Calu3 (cell line): ENCODE measurements at regions of chr16 and their contacts with region 1.

Region 1: DNA sequence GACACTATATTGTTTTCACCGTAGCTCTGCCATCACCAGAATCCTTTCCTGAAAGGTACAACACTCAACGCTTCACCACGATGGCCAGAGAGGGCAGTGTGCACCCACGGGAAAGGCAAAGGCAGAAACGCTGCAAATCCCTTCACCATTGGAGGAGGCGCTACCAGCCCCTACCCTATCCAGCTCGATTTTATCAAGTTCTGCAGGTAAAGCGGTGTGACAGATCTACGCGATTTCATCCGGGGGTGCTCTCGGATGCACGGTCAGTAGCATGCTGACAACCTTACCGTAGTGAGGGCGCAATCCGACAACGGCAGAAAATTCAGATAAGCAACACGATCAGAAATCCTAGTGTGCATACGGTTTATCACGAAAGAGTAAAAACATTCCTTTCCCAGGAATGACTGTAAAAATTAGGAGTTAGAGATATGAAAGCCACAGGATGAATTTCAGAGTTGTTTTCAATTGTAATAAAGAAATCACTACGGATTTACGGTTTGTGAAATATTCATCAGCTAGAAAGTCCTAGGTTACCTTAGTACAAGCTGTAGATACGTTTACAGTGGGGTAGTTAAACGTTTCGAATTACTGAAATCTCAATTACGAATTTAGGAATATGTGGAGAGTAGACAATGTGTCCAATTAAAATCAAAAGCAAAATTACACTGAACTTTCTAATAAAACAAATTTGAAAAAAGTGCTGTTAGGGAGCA is 1.8 kb downstream of the NETO2 start:
- DNase-seq: peak; percentile 93
- H3K4me3 Mint-ChIP-seq: peak overlapping the region; percentile 94
- H3K27ac Mint-ChIP-seq: peak overlapping the region; percentile 81
- H3K4me1 Mint-ChIP-seq: peaks cover 44% of the 10 kb centered on the region
- H3K27me3 Mint-ChIP-seq: no peaks in the 10 kb centered on the region
- CTCF ChIP-seq: peak; percentile 82

Region 2: DNA sequence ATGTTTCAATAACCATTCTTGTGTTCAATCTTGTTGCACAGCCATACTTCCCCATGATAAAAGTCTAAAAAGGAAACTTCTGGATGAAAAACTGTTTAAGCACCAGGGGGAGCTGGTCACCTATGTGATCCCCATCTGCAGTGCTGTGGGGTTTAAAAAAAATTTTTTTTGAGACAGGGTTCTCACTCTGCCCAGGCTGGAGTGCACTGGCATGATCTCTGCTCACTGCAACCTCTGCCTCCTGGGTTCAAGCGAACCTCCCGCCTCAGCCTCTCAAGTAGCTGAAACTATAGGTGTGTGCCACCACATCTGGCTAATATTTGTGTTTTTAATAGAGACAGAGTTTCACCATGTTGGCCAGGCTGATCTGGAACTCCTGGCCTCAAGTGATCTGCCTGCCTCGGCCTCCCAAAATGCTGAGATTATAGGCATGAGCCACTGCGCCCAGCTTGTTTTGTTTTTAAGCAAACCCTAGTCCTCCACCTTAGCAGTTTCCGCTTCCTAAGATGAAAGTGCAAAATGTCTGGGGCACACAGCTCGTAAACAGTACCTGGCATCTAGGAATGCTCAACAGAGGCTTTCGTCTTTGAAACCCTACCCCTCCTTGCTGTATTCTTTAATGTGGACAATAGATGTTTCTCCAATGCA is 193.9 kb before region 1 on chr16:
- CTCF ChIA-PET with region 1: interaction called, 5 read pairs
- intact Hi-C with region 1: loop called (anchors 5 kb)
- DNase-seq: peak; percentile 66
- H3K4me3 Mint-ChIP-seq: no peak overlapping the region
- H3K27ac Mint-ChIP-seq: no peak overlapping the region
- H3K4me1 Mint-ChIP-seq: peaks cover 9% of the 10 kb centered on the region
- H3K27me3 Mint-ChIP-seq: no peaks in the 10 kb centered on the region
- CTCF ChIP-seq: peak; percentile 57

Region 3: GRCh38 chr16:47058295-47059086 is 83.4 kb before region 1 on chr16:
- CTCF ChIA-PET with region 1: no interaction called
- intact Hi-C with region 1: no loop called
- DNase-seq: no peak
- H3K4me3 Mint-ChIP-seq: no peak overlapping the region
- H3K27ac Mint-ChIP-seq: no peak overlapping the region
- H3K4me1 Mint-ChIP-seq: no peaks in the 10 kb centered on the region
- H3K27me3 Mint-ChIP-seq: peaks cover 13% of the 10 kb centered on the region
- CTCF ChIP-seq: no peak

Region 4: DNA sequence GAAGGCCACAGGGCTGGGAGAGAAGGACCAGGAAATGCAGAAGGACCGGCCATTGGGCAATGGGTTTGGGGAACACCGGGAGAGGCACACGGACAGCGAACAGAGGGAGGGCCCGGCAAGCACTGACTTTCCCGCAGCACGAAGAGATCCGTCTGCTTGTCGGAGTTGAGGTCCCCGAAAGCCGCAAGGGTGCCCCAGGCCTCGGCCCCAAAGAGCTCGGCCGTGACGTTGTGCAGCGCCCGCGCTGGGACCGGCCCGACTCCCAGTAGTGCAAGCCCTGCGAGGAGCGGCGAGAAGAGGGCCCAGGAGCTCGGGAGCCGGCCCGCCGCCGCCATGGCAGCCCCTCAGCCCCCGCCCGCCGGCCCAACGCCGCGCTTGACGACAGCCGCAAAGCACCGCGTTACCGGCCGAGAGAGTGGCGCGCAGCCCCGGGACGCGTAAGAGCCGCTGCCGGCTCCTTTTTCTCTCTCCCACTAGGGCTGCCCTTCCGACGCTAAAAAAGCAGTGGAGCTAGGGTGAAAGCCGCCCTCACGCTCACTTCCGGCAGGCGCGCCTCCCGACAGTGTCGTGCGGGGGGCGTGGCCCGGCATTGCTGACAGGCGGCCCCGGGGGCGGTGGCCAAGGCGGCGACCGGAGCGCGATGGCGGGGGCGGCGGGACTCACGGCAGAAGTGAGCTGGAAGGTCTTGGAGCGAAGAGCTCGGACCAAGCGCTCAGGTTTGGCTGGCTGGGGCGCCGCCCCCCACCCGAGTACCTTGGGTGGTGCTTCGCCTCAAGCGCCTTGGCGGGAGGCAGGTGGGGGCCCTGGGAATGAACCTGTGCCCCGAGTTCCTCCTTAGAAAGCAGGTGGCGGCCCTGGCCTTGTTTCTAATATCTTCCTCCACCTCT is 319.0 kb after region 1 on chr16 and contains the starts of genes ITFG1 and PHKB:
- CTCF ChIA-PET with region 1: no interaction called
- intact Hi-C with region 1: loop called (anchors 5 kb)
- DNase-seq: peak; percentile 98
- H3K4me3 Mint-ChIP-seq: peak within 1 kb of the TSS; percentile 88
- H3K27ac Mint-ChIP-seq: peak within 1 kb of the TSS; percentile 97
- H3K4me1 Mint-ChIP-seq: peaks cover 18% of the 10 kb centered on the region
- H3K27me3 Mint-ChIP-seq: no peaks in the 10 kb centered on the region
- CTCF ChIP-seq: no peak
- total RNA-seq, gene ITFG1: 65.5 and 68.6 TPM in 2 replicates
- total RNA-seq, gene PHKB: 80.4 and 83.4 TPM in 2 replicates

Region 5: GRCh38 chr16:48054881-48055601 is 913.1 kb after region 1 on chr16:
- CTCF ChIA-PET with region 1: interaction called, 6 read pairs
- intact Hi-C with region 1: loop called (anchors 2 kb)
- DNase-seq: peak; percentile 52
- H3K4me3 Mint-ChIP-seq: no peak overlapping the region
- H3K27ac Mint-ChIP-seq: no peak overlapping the region
- H3K4me1 Mint-ChIP-seq: no peaks in the 10 kb centered on the region
- H3K27me3 Mint-ChIP-seq: peaks cover 74% of the 10 kb centered on the region
- CTCF ChIP-seq: peak; percentile 81

Region 6: DNA sequence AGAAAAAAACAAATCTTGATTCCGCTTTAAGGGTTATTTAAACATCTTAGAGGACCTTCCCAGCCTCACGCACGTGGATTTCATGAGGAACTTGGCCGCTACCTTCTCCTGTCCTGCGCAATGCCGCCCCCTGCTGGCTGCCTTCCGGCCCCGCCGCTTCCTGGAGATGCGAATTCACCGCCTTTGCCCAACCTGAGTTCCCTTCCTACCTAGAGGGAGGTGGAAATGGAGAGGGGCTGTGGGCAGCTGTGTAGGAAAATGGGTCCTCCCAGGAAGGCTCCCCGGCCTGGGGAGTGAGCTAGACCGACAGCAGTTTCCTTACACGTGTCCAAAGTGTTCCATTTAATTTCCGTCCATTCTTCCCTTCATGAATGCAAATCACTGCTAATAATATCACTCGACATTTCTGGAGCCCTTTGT is 1014.9 kb after region 1 on chr16:
- CTCF ChIA-PET with region 1: no interaction called
- intact Hi-C with region 1: loop called (anchors 1 kb)
- DNase-seq: peak; percentile 94
- H3K4me3 Mint-ChIP-seq: no peak overlapping the region
- H3K27ac Mint-ChIP-seq: no peak overlapping the region
- H3K4me1 Mint-ChIP-seq: peaks cover 20% of the 10 kb centered on the region
- H3K27me3 Mint-ChIP-seq: no peaks in the 10 kb centered on the region
- CTCF ChIP-seq: peak; percentile 98